Naive thymus-derived CD4-positive, alpha-beta T cell (primary cell): ENCODE measurements at regions of chr19 and their contacts with region 1.

Region 1: DNA sequence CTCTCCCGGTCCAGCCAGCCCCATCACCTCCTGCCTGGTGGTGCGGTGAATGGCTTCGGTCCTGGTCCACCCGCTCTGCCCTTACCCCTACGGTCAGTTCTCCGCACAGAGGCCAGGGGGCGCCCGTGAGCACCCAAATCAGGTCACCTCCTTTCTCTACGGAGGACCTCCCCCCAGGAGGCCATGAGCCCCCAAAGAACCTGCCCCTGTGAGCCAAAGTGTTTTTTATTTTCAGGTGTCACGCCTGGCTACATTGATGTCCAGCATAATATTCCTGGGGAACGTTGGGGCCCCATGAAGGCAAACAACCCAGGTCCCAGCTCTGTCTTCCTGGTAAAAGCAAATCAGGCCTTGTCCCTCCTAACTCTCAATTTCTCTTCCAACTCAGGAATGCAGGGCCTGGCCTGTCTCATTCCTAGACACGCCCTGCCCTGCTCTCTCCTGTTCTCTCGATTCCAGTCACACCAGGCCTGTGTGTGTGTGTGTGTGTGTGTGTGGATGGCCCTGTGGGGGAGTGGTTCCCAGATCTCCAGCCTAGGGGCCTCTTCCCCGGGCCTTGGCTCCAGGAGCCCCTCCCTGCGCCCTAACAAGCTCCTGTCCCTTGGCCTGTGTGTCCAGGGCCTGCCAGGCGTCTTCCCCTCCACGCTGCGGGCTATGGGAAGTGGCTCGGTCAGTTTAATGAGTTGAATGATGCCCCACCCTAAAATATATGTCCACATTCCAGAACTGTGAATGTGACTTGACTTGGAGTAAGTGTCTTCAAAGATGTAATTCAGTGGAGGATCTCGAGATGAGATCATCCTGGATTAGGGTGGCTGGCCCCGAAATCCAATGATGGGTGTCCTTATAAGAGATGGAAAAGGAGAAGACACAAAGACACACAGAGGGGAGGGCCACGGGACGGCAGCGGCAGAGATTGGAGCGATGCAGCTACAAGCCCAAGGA is 9.8 kb upstream of the GIPC1 start:
- DNase-seq: peak; percentile 62 to 79 (median 71)
- ATAC-seq: peak; percentile 68
- H3K4me3 ChIP-seq: no peak overlapping the region
- H3K4me3 Mint-ChIP-seq: peak overlapping the region; percentile 13 to 84 (median 65)
- H3K27ac ChIP-seq: peak overlapping the region; percentile 70
- H3K27ac Mint-ChIP-seq: peak overlapping the region; percentile 96 to 100 (median 97)
- H3K4me1 ChIP-seq: peaks cover 29 to 50% of the 10 kb centered on the region in 2 donors
- H3K4me1 Mint-ChIP-seq: peaks cover 43 to 78% (median 69%) of the 10 kb centered on the region in 7 donors
- H3K27me3 ChIP-seq: no peaks in the 10 kb centered on the region
- H3K27me3 Mint-ChIP-seq: peaks cover 0 to 7% (median 0%) of the 10 kb centered on the region in 5 donors

Region 2: GRCh38 chr19:14487370-14488125 is 18.2 kb before region 1 on chr19:
- CTCF ChIA-PET with region 1: interaction called, 6 read pairs
- POLR2A ChIA-PET with region 1: interaction called, 10 read pairs
- intact Hi-C with region 1: no loop called
- DNase-seq: no peak
- ATAC-seq: no peak
- H3K4me3 ChIP-seq: no peak overlapping the region
- H3K4me3 Mint-ChIP-seq: no peak overlapping the region
- H3K27ac ChIP-seq: no peak overlapping the region
- H3K27ac Mint-ChIP-seq: peak overlapping the region in 1 of 9 donors; percentile 48
- H3K4me1 ChIP-seq: peaks cover 0 to 9% of the 10 kb centered on the region in 2 donors
- H3K4me1 Mint-ChIP-seq: peaks cover 5 to 12% (median 11%) of the 10 kb centered on the region in 7 donors
- H3K27me3 ChIP-seq: no peaks in the 10 kb centered on the region
- H3K27me3 Mint-ChIP-seq: no peaks in the 10 kb centered on the region

Region 3: DNA sequence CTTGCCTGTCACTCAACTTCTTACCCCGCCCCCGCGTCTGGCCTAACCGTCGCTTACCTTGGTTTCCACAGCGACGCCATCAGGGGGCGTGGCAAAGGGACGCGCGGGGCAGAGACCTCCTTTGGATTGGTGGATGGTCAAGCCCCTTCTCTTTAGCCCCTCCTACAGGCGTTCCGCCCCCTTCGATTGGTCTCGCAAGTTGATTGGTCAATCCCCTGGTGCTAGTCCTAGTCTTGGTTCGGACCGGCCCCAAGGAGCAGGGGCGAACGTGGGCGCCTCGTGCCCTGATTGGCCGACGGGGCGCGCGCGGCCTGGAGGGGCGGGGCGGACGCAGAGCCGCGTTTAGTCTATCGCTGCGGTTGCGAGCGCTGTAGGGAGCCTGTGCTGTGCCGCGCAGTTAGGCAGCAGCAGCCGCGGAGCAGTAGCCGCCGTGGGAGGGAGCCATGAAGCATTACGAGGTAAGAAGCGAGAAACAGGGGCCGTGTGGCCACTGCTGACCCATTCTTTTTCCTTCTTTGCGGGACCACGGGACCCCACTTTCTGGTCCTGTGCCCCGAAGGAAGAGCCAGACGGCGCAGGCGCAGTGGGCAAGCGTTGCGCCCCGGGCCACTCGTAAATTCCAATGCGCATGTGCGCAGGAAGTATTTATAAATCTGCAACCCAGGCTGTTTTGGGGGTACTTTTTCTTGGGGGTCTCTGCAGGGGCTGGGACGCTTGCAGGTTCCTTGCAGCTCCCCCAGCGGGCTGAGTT is 23.7 kb after region 1 on chr19 and contains the start of gene TECR:
- CTCF ChIA-PET with region 1: interaction called, 73 read pairs
- POLR2A ChIA-PET with region 1: interaction called, 1,101 read pairs
- intact Hi-C with region 1: loop called (anchors 1 kb)
- DNase-seq: peak; percentile 98 to 100 (median 100)
- ATAC-seq: peak; percentile 96
- H3K4me3 ChIP-seq: peak within 1 kb of the TSS; percentile 96
- H3K4me3 Mint-ChIP-seq: peak within 1 kb of the TSS; percentile 88 to 97 (median 95)
- H3K27ac ChIP-seq: peak within 1 kb of the TSS; percentile 89
- H3K27ac Mint-ChIP-seq: peak within 1 kb of the TSS; percentile 95 to 100 (median 98)
- H3K4me1 ChIP-seq: peaks cover 22 to 30% of the 10 kb centered on the region in 2 donors
- H3K4me1 Mint-ChIP-seq: peaks cover 9 to 72% (median 54%) of the 10 kb centered on the region in 7 donors
- H3K27me3 ChIP-seq: no peaks in the 10 kb centered on the region
- H3K27me3 Mint-ChIP-seq: no peaks in the 10 kb centered on the region
- total RNA-seq, gene TECR: 123 to 218 (median 150) TPM

Region 4: DNA sequence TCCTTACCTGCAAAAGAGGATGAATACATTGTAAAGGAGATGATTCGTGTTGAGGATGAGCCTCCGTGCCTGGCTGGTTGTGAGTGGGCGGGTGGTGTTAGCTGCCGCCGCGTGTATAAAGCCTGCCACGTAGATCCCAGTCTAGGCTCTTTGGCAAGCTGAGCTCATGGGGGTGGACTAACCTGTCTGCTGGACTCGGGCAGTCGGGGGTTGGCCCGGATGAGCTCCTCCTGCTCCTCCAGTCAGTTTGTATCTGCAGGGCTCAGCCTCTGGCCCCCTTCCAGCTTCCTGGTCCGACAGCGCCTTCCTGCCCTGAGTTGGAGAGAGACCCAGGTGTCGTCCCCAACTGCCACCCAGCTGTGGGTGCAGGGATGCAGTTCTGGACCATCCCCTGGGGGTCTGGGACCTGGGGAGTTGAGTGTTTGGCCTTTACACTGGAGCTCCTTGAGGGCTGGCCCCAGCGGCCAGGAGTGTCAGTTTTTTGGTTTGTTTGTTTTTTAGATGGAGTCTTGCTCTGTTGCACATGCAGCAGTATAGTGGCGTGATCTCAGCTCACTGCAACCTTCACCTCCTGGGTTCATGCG is 44.5 kb after region 1 on chr19:
- CTCF ChIA-PET with region 1: interaction called, 29 read pairs
- POLR2A ChIA-PET with region 1: interaction called, 1,101 read pairs
- intact Hi-C with region 1: loop called (anchors 1 kb)
- DNase-seq: no peak
- ATAC-seq: no peak
- H3K4me3 ChIP-seq: no peak overlapping the region
- H3K4me3 Mint-ChIP-seq: peak overlapping the region in 5 of 10 donors; percentile 8 to 76 (median 36)
- H3K27ac ChIP-seq: no peak overlapping the region
- H3K27ac Mint-ChIP-seq: peak overlapping the region; percentile 64 to 97 (median 84)
- H3K4me1 ChIP-seq: peaks cover 16 to 39% of the 10 kb centered on the region in 2 donors
- H3K4me1 Mint-ChIP-seq: peaks cover 28 to 70% (median 57%) of the 10 kb centered on the region in 7 donors
- H3K27me3 ChIP-seq: no peaks in the 10 kb centered on the region
- H3K27me3 Mint-ChIP-seq: no peaks in the 10 kb centered on the region

Region 5: GRCh38 chr19:14556662-14557188 is 51.0 kb after region 1 on chr19:
- CTCF ChIA-PET with region 1: interaction called, 29 read pairs
- POLR2A ChIA-PET with region 1: interaction called, 30 read pairs
- intact Hi-C with region 1: loop called (anchors 1 kb)
- DNase-seq: peak; percentile 42 to 75 (median 60)
- ATAC-seq: peak; percentile 91
- H3K4me3 ChIP-seq: peak overlapping the region; percentile 10
- H3K4me3 Mint-ChIP-seq: peak overlapping the region; percentile 29 to 79 (median 68)
- H3K27ac ChIP-seq: no peak overlapping the region
- H3K27ac Mint-ChIP-seq: peak overlapping the region in 8 of 9 donors; percentile 79 to 90 (median 84)
- H3K4me1 ChIP-seq: peaks cover 15 to 53% of the 10 kb centered on the region in 2 donors
- H3K4me1 Mint-ChIP-seq: peaks cover 28 to 71% (median 40%) of the 10 kb centered on the region in 7 donors
- H3K27me3 ChIP-seq: no peaks in the 10 kb centered on the region
- H3K27me3 Mint-ChIP-seq: no peaks in the 10 kb centered on the region

Region 6: GRCh38 chr19:14916848-14917247 is 411.1 kb after region 1 on chr19:
- CTCF ChIA-PET with region 1: no interaction called
- POLR2A ChIA-PET with region 1: no interaction called
- intact Hi-C with region 1: no loop called
- DNase-seq: no peak
- ATAC-seq: no peak
- H3K4me3 ChIP-seq: no peak overlapping the region
- H3K4me3 Mint-ChIP-seq: no peak overlapping the region
- H3K27ac ChIP-seq: no peak overlapping the region
- H3K27ac Mint-ChIP-seq: no peak overlapping the region
- H3K4me1 ChIP-seq: no peaks in the 10 kb centered on the region
- H3K4me1 Mint-ChIP-seq: no peaks in the 10 kb centered on the region
- H3K27me3 ChIP-seq: no peaks in the 10 kb centered on the region
- H3K27me3 Mint-ChIP-seq: peaks cover 0 to 60% (median 52%) of the 10 kb centered on the region in 5 donors